ENCODE measurements at regions of chr14 and their contacts with region 1.

Region 1: GRCh38 chr14:23861666-23862065 is 91.9 kb upstream of the DHRS4 start:
- DNase-seq: no peak
- H3K4me3 ChIP-seq: no peak overlapping the region
- H3K27ac ChIP-seq: no peak overlapping the region
- H3K4me1 ChIP-seq: no peaks in the 10 kb centered on the region
- H3K27me3 ChIP-seq: no peaks in the 10 kb centered on the region
- CTCF ChIP-seq: no peak
- POLR2A ChIP-seq: no peak

Region 2: GRCh38 chr14:23640524-23641141 is 221.0 kb before region 1 on chr14:
- intact Hi-C with region 1: loop called (anchors 10 kb)
- DNase-seq: peak; percentile 42
- H3K4me3 ChIP-seq: no peak overlapping the region
- H3K27ac ChIP-seq: peak overlapping the region; percentile 11 to 12
- H3K4me1 ChIP-seq: no peaks in the 10 kb centered on the region
- H3K27me3 ChIP-seq: no peaks in the 10 kb centered on the region
- CTCF ChIP-seq: no peak
- POLR2A ChIP-seq: no peak

Measured in prostate gland (tissue), 2 donors.